ENCODE measurements at regions of chr1 and their contacts with region 1.

Region 1: GRCh38 chr1:205961405-205961804 is 18.1 kb upstream of the SLC26A9 start:
- DNase-seq: no peak

Region 2: GRCh38 chr1:205416322-205416721 is 545.1 kb before region 1 on chr1:
- in situ Hi-C with region 1: no loop called
- DNase-seq: no peak

Region 3: DNA sequence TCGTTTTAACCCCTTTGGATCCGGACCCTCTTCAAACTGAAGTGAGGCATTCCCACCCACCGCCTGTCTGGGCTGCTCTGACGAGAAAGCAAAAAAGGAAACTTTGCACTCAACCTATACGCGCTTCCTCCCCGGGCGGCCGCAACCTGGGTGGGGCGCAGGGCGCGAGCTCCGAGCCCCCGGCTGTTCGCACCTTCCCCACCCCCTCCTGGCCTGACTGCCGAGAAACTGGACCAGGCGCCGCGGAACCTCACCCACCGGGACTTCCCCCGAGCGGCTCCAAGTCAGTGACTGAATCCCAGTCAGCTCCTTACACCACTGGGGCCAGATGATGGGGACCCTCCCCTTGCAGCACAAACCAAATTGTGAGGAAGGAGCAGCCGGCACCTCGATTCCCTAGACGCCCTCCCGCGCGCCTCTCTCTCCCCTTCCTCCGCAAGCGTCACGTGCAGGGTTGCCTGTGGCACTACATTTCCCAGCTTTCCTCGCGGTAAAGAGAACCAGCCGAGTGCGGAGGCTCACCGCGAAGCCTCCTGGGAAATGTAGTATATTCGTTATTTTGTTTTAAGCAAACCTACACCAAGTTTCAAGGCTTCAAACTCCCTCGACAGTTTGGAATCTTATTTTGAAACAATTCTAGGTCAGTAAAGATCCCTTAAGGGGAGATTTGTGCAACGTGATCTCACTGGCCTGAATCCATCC is 186.2 kb before region 1 on chr1 and contains the start of gene RAB29:
- in situ Hi-C with region 1: loop called (anchors 25 kb)
- DNase-seq: peak; percentile 83

Region 4: DNA sequence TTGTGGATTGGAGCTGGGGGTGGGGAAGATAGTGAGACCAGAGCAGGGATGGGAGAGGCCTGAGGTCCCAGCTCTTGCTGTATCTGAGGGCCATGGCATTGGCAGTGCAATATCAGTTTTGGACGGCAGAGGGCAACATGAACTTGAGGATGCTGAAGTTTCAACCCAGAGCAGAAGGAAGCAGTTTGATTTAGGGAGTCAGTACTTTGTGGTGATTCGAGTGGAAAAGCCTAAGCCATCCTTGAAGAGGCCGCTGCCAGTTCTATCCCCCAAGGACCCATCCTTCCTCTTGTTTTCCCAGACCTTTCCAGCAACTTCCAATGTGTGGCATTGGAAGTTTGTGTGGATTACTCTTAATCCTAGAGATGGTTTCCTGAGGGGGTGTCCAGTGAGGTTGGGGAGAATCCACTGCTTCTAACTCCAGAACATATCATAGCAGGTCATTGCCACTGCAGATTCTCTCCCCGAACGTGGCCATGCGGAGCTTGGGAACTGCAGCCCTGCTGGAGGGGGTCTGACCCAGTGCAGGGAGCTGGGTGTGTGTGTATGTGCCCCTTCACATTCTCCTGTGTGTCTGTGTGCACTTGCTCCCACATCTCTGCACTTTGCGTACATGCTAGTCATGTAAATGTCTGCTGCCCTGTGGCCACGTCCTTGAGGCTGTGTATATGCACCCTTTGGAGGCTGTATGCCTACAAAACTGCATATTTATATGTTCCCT is 42.2 kb before region 1 on chr1:
- in situ Hi-C with region 1: loop called (anchors 10 kb)
- DNase-seq: peak; percentile 90